ENCODE measurements at regions of chr6 and their contacts with region 1.

Region 1: GRCh38 chr6:126531840-126532239 is 191.9 kb downstream of the CENPW start:
- DNase-seq: no peak
- H3K4me3 ChIP-seq: no peak overlapping the region
- H3K27ac ChIP-seq: peak overlapping the region; percentile 61 to 77 (median 70)
- H3K4me1 ChIP-seq: peaks cover 0 to 33% (median 7%) of the 10 kb centered on the region in 4 donors
- H3K27me3 ChIP-seq: no peaks in the 10 kb centered on the region
- CTCF ChIP-seq: no peak
- EP300 ChIP-seq: no peak
- POLR2A ChIP-seq: no peak

Region 2: DNA sequence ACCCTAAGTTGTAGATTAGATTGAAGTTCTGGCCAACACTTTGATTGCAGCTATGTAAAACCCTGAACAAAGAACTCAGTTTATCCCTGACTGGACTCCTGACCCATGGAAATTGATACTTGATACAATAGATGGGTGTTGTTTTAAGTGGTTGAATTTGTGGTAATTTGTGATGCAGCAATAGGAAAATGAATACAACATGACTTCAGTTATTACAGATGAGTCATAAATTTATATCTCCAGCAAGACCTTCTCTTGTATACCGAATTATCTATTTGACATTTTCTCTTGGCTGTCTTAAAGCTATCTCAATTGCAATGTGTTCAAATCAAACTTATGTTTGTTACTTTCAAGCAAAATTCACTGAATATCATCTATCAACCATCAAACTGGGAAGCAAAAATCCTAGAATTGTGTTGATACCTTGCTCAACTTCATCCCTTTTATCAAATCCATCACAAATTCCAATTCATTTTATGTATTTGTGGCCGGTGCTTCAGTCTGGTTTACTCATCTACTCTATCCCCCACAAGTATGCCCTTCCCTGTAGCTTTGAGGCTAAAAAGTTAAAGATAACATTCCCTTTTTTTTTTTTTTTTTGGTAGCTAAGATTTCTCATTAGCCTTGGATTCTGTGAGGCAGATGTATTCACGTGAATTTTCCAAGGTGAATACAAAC is 321.3 kb before region 1 on chr6:
- in situ Hi-C with region 1: no loop called
- intact Hi-C with region 1: no loop called
- DNase-seq: no peak
- H3K4me3 ChIP-seq: no peak overlapping the region
- H3K27ac ChIP-seq: no peak overlapping the region
- H3K4me1 ChIP-seq: no peaks in the 10 kb centered on the region
- H3K27me3 ChIP-seq: no peaks in the 10 kb centered on the region
- CTCF ChIP-seq: no peak
- EP300 ChIP-seq: no peak
- POLR2A ChIP-seq: no peak

Region 3: GRCh38 chr6:126477678-126478077 is 54.2 kb before region 1 on chr6:
- in situ Hi-C with region 1: no loop called
- intact Hi-C with region 1: no loop called
- DNase-seq: no peak
- H3K4me3 ChIP-seq: no peak overlapping the region
- H3K27ac ChIP-seq: no peak overlapping the region
- H3K4me1 ChIP-seq: no peaks in the 10 kb centered on the region
- H3K27me3 ChIP-seq: no peaks in the 10 kb centered on the region
- CTCF ChIP-seq: no peak
- EP300 ChIP-seq: no peak
- POLR2A ChIP-seq: no peak

Region 4: GRCh38 chr6:126504792-126505191 is 27.0 kb before region 1 on chr6:
- in situ Hi-C with region 1: no loop called
- intact Hi-C with region 1: loop called (anchors 1 kb)
- DNase-seq: no peak
- H3K4me3 ChIP-seq: no peak overlapping the region
- H3K27ac ChIP-seq: no peak overlapping the region
- H3K4me1 ChIP-seq: no peaks in the 10 kb centered on the region
- H3K27me3 ChIP-seq: no peaks in the 10 kb centered on the region
- CTCF ChIP-seq: no peak
- EP300 ChIP-seq: no peak
- POLR2A ChIP-seq: no peak

Measured in transverse colon (tissue), 4 donors.